OCI-LY7 (cell line): ENCODE measurements at regions of chrX and their contacts with region 1.

Region 1: DNA sequence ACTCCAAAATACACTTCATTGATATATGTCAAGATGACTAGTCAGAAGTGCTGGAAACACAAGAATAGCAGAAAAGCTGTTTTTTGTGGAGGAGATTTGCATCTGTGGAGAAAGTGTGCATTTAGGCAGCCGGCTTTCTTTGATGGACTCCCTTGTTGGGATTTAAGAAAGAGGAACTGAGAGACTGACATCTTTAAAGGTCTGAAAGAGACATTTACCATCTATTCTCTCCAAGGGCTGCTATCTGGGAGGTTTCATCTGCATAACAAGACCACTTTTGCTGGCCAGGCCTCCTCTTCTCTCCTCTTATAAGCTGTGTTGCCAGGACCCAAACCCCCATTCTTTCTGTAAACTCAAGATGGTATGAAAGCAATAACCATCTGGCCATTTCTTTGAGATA is 1065.0 kb downstream of the NLGN4X start:
- DNase-seq: peak; percentile 84
- H3K4me3 ChIP-seq: peak overlapping the region; percentile 50
- H3K27ac ChIP-seq: peak overlapping the region; percentile 99
- H3K4me1 ChIP-seq: peaks cover 43% of the 10 kb centered on the region
- CTCF ChIP-seq: no peak

Region 2: DNA sequence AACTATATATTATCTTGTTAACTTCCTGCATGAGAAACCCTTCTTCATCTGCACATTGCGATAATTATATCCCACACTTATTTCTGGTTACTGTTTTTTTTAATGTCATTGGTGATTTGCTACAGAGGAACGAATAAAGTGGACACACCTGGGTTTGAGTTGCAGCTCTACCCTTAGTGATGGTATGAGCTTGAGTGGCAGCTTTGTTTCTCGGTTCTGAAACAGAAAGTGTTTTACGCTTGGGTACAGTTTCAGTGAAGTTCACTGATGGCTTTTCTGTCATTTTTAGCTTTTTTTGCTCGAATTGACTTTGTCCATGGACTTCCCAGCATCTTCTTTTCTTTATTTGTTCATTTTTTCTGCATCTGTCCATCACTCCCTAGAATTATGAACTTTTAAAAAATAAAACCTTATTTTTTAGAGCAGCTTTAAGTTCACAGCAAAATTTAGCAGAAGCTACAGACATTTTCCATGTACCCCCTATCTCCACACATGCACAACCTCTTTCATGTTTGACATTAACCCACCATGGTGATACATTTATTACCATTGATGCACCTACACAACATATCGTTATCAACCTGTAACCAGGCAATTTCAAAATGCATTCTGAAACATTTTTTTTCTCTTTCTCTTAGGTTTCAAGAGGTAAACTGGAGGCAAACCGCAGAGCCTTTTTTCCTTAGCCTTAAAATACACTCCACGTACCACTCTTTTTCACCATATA is 408.6 kb before region 1 on chrX:
- CTCF ChIA-PET with region 1: no interaction called
- POLR2A ChIA-PET with region 1: interaction called, 3 read pairs
- intact Hi-C with region 1: loop called (anchors 1 kb)
- DNase-seq: peak; percentile 84
- H3K4me3 ChIP-seq: peak overlapping the region; percentile 46
- H3K27ac ChIP-seq: peak overlapping the region; percentile 94
- H3K4me1 ChIP-seq: peaks cover 27% of the 10 kb centered on the region
- CTCF ChIP-seq: no peak

Region 3: GRCh38 chrX:4909348-4909747 is 254.3 kb before region 1 on chrX:
- CTCF ChIA-PET with region 1: no interaction called
- POLR2A ChIA-PET with region 1: no interaction called
- intact Hi-C with region 1: loop called (anchors 10 kb)
- DNase-seq: no peak
- H3K4me3 ChIP-seq: no peak overlapping the region
- H3K27ac ChIP-seq: no peak overlapping the region
- H3K4me1 ChIP-seq: no peaks in the 10 kb centered on the region
- CTCF ChIP-seq: no peak

Region 4: GRCh38 chrX:5646818-5647217 is 483.2 kb after region 1 on chrX:
- CTCF ChIA-PET with region 1: no interaction called
- POLR2A ChIA-PET with region 1: no interaction called
- intact Hi-C with region 1: loop called (anchors 10 kb)
- DNase-seq: peak; percentile 82
- H3K4me3 ChIP-seq: peak overlapping the region; percentile 40
- H3K27ac ChIP-seq: peak overlapping the region; percentile 64
- H3K4me1 ChIP-seq: peaks cover 64% of the 10 kb centered on the region
- CTCF ChIP-seq: no peak